ENCODE measurements at regions of chr7 and their contacts with region 1.

Region 1: DNA sequence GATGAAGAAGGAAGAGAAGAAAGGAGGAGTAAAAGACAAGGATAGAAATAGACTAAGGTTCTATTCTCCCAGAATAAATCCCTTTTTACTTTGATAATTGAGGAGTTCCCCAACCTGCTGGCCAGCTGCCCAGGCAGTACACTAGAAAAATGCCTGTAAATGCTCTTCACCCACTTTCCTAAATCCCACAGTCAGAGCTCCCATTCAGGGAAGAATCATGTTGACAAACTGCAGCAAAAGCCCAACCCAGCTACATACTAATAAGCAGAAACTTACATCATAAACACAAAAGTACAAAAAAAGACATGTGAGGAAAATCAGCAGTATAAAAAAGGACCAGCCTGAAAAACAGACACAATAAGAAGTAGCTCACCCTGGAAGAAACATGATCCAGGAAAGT is 15.8 kb upstream of the KDM7A start:
- DNase-seq: no peak
- ATAC-seq: no peak
- H3K4me3 ChIP-seq: no peak overlapping the region
- H3K4me3 Mint-ChIP-seq: no peak overlapping the region
- H3K27ac ChIP-seq: no peak overlapping the region
- H3K27ac Mint-ChIP-seq: no peak overlapping the region
- H3K4me1 ChIP-seq: no peaks in the 10 kb centered on the region
- H3K4me1 Mint-ChIP-seq: peaks cover 0 to 12% (median 0%) of the 10 kb centered on the region in 3 donors
- H3K27me3 ChIP-seq: no peaks in the 10 kb centered on the region
- H3K27me3 Mint-ChIP-seq: no peaks in the 10 kb centered on the region

Region 2: DNA sequence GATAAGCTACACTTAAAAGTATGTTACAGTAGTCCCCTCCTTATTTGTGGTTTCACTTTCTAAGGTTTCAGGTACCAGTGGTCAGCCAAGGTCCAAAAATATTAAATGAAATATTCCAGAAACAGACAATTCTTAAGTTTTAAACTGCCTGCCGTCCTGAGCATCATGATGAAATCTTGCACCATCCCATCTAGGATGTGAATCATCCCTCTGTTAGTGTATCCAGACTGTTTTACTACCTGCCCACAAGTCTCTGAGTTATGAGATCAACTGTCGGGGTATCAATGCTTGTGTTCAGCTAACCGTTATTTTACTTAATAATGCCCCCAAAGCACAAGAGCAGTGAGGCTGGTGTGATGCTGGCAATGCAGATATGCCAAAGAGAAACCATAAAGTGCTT is 27.2 kb before region 1 on chr7:
- CTCF ChIA-PET with region 1: interaction called in 1 of 2 experiments, 10 read pairs
- POLR2A ChIA-PET with region 1: no interaction called
- DNase-seq: no peak
- ATAC-seq: no peak
- H3K4me3 ChIP-seq: no peak overlapping the region
- H3K4me3 Mint-ChIP-seq: no peak overlapping the region
- H3K27ac ChIP-seq: no peak overlapping the region
- H3K27ac Mint-ChIP-seq: no peak overlapping the region
- H3K4me1 ChIP-seq: peaks cover 13 to 16% of the 10 kb centered on the region in 2 experiments
- H3K4me1 Mint-ChIP-seq: peaks cover 76 to 82% (median 81%) of the 10 kb centered on the region in 3 donors
- H3K27me3 ChIP-seq: no peaks in the 10 kb centered on the region
- H3K27me3 Mint-ChIP-seq: no peaks in the 10 kb centered on the region

Region 3: GRCh38 chr7:140249036-140249806 is 56.6 kb after region 1 on chr7:
- CTCF ChIA-PET with region 1: interaction called in 1 of 2 experiments, 15 read pairs
- POLR2A ChIA-PET with region 1: no interaction called
- DNase-seq: no peak
- ATAC-seq: no peak
- H3K4me3 ChIP-seq: no peak overlapping the region
- H3K4me3 Mint-ChIP-seq: no peak overlapping the region
- H3K27ac ChIP-seq: no peak overlapping the region
- H3K27ac Mint-ChIP-seq: no peak overlapping the region
- H3K4me1 ChIP-seq: peaks cover 0 to 26% of the 10 kb centered on the region in 2 experiments
- H3K4me1 Mint-ChIP-seq: peaks cover 16 to 21% (median 17%) of the 10 kb centered on the region in 3 donors
- H3K27me3 ChIP-seq: no peaks in the 10 kb centered on the region
- H3K27me3 Mint-ChIP-seq: no peaks in the 10 kb centered on the region

Region 4: GRCh38 chr7:140297192-140297591 is 104.6 kb after region 1 on chr7:
- CTCF ChIA-PET with region 1: interaction called in 1 of 2 experiments, 12 read pairs
- POLR2A ChIA-PET with region 1: no interaction called
- DNase-seq: peak in 4 of 35 experiments; percentile 2 to 17 (median 6)
- ATAC-seq: peak in 3 of 4 experiments; percentile 30 to 38 (median 37)
- H3K4me3 ChIP-seq: no peak overlapping the region
- H3K4me3 Mint-ChIP-seq: no peak overlapping the region
- H3K27ac ChIP-seq: no peak overlapping the region
- H3K27ac Mint-ChIP-seq: no peak overlapping the region
- H3K4me1 ChIP-seq: no peaks in the 10 kb centered on the region
- H3K4me1 Mint-ChIP-seq: peaks cover 0 to 6% (median 6%) of the 10 kb centered on the region in 3 donors
- H3K27me3 ChIP-seq: no peaks in the 10 kb centered on the region
- H3K27me3 Mint-ChIP-seq: no peaks in the 10 kb centered on the region

Measured in T-cell (primary cell).